ENCODE measurements at regions of chr17 and their contacts with region 1.

Region 1: DNA sequence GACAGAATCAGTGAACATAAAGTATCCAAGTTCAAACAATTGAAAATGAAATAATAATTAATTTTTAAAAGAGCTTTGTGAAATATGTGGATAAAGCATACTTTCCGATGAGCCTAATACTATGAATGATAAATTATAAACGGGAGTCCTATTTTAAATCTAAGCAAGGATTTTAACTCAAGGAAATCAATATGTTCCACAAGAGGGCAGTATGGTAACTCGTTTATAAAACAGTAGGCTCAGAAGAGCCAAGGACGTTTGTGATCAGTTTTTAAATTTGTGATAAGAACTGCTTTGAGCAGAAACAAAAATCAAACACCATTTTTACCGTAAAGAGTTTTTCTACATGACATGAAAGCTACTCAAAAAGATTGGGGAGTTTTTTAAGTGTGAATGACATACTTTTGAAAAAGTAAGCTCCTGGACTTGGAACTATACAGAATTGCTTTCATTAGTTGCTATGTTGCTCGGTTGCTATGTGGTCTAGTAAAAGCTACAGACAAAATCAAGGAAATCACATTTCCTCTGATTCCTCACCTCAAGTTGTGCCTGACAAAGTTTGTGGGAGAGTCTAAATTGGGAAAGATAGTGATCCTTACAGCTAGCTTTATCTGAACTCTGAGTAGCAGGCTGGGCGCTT is 11.8 kb upstream of the TEKT1 start:
- DNase-seq: no peak
- H3K4me3 Mint-ChIP-seq: no peak overlapping the region
- H3K27ac Mint-ChIP-seq: no peak overlapping the region
- H3K4me1 Mint-ChIP-seq: peaks cover 5% of the 10 kb centered on the region
- H3K27me3 Mint-ChIP-seq: peaks cover 46% of the 10 kb centered on the region

Region 2: DNA sequence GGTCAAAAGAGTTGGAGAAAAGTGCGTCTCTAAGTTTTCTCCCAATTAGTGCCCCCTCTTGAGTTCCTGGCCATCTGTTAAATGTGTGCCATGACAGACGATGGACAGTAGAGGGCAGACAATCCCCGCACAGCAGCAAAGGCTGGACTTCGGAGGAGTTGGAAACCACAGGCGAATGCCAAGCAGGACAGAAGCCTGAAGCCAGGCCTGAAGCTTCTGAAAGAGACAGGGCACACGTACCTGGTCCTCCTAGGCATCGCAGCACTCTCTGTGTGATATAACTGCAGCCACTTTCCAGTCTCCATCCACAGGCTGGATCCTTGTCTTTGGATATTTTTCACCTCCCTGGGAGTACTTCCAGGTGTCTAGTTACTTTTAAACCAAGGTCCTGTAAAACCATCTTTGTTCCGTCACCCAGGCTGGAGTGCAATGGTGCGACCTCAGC is 177.3 kb before region 1 on chr17:
- CTCF ChIA-PET with region 1: interaction called, 14 read pairs
- DNase-seq: peak; percentile 58
- H3K4me3 Mint-ChIP-seq: no peak overlapping the region
- H3K27ac Mint-ChIP-seq: no peak overlapping the region
- H3K4me1 Mint-ChIP-seq: peaks cover 12% of the 10 kb centered on the region
- H3K27me3 Mint-ChIP-seq: no peaks in the 10 kb centered on the region

Region 3: DNA sequence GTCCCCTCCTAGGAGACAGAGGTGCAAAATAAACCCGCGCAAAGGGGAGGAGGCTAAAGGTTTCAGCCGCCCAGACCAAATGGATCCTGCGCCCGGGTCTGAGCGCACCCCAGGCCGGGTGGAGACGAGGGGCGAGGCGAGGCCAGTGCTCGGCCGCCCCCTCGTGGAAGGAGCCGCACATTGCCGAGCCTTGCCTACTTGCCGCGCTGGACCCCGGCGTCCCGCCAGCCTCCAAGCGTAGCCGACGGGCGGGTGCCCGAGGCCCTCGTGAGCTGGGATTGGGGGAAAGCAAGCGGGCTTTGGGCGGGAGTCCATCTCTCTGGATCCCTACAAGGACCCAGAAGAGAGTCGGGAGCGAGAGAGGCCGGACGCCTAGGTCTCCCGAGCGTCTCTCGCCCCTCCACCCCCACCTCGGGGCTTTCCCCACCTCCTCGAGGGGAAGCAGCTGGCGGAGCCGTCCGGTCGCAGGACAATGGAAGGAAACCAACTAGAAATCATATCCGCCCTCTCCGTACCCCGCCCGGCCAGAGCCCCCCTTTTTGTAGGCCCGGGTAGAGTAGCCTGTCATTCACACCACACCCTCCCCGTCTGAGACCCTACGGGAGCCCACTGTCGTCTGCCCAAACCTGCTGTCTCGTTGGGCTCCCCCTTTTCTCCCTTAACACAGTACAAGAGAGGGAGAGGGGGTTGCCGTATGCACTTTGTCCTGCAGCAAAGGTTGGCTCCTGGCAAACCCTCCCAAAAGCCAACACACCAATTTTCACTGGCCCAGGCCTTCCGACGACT is 178.8 kb after region 1 on chr17:
- CTCF ChIA-PET with region 1: interaction called, 17 read pairs
- DNase-seq: peak; percentile 83
- H3K4me3 Mint-ChIP-seq: peak overlapping the region; percentile 26
- H3K27ac Mint-ChIP-seq: no peak overlapping the region
- H3K4me1 Mint-ChIP-seq: peaks cover 69% of the 10 kb centered on the region
- H3K27me3 Mint-ChIP-seq: peaks cover 50% of the 10 kb centered on the region

Measured in activated naive CD4-positive, alpha-beta T cell treated with anti-CD3 and anti-CD28 coated beads, Interleukin-2, amount 10 ng/mL, durations not matched to agents 7 days and 5 days (primary cell).